ENCODE measurements at regions of chr1 and their contacts with region 1.

Region 1: DNA sequence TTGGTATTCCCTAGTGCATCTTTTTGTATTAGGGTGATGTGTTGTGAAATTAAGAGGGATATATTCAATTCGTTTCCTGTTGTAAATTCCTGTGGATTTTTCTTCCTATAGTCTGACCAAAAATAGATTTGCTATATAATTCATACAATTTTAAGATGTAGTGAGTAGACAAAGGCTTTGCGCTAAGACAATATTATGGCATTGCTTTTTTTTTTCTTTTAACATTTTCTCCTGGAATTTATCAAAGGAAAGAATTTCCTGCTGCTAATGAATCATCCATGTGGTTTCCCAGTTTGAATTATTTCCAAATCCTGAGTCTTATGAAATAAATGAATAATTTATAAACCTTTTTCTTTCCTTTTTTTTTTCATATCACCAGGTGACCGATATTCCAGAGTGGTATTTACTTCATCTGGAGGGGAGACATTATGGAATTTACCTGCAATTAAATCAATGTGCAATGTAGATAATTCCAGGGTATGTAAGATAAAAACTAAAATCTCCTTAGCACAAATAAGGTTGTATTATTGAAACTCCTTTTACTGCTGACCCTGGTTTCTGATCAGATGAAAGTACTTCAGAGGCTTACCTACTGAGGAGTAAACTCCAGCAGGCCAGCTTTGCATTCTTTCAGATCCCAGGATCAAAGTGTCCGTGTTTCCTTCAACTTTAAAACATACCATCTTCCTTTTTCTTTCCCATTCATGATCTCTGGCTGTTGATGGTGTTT is 148.4 kb downstream of the TLR5 start:
- DNase-seq: no peak
- H3K4me3 Mint-ChIP-seq: no peak overlapping the region
- H3K27ac Mint-ChIP-seq: peak overlapping the region; percentile 75
- H3K4me1 Mint-ChIP-seq: peaks cover 27% of the 10 kb centered on the region
- H3K27me3 Mint-ChIP-seq: no peaks in the 10 kb centered on the region
- CTCF ChIP-seq: no peak

Region 2: GRCh38 chr1:222691016-222691415 is 303.7 kb before region 1 on chr1:
- CTCF ChIA-PET with region 1: no interaction called
- intact Hi-C with region 1: no loop called
- DNase-seq: no peak
- H3K4me3 Mint-ChIP-seq: no peak overlapping the region
- H3K27ac Mint-ChIP-seq: no peak overlapping the region
- H3K4me1 Mint-ChIP-seq: no peaks in the 10 kb centered on the region
- H3K27me3 Mint-ChIP-seq: no peaks in the 10 kb centered on the region
- CTCF ChIP-seq: no peak

Region 3: DNA sequence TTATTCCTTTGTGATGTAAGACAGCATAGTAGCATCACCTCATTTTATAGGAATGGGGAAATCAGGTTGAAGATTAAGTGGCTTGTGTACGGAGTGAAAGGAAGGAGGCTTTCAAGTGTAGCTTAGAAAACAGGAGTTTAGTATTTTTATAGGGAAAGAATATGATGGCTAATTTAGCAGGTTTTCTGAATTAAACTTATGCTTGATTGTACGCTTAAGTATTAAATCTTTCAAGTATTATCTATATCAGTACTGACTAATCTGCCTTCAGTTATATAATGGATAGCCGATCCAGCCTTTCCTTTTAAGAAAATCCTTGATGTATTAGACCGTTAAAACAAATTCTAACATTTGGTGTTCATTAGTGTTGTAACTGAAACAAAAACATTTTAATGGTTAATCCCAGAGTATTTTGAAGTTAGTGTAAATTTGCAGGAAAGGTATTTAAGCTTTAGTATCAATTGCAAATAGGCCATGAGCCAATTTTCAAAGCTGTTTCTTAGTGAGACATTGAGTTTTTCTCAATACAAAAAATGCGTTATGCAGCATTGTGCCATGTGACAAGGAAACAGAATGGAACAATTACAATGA is 150.4 kb before region 1 on chr1:
- CTCF ChIA-PET with region 1: no interaction called
- intact Hi-C with region 1: loop called (anchors 5 kb)
- DNase-seq: no peak
- H3K4me3 Mint-ChIP-seq: peak overlapping the region; percentile 55
- H3K27ac Mint-ChIP-seq: peak overlapping the region; percentile 95
- H3K4me1 Mint-ChIP-seq: peaks cover 21% of the 10 kb centered on the region
- H3K27me3 Mint-ChIP-seq: no peaks in the 10 kb centered on the region
- CTCF ChIP-seq: no peak

Region 4: GRCh38 chr1:222905151-222905550 is 89.5 kb before region 1 on chr1:
- CTCF ChIA-PET with region 1: no interaction called
- intact Hi-C with region 1: no loop called
- DNase-seq: no peak
- H3K4me3 Mint-ChIP-seq: no peak overlapping the region
- H3K27ac Mint-ChIP-seq: no peak overlapping the region
- H3K4me1 Mint-ChIP-seq: no peaks in the 10 kb centered on the region
- H3K27me3 Mint-ChIP-seq: no peaks in the 10 kb centered on the region
- CTCF ChIP-seq: no peak

Measured in Calu3 (cell line).